Ascending aorta (tissue), 2 donors: ENCODE measurements at regions of chr6 and their contacts with region 1.

Region 1: DNA sequence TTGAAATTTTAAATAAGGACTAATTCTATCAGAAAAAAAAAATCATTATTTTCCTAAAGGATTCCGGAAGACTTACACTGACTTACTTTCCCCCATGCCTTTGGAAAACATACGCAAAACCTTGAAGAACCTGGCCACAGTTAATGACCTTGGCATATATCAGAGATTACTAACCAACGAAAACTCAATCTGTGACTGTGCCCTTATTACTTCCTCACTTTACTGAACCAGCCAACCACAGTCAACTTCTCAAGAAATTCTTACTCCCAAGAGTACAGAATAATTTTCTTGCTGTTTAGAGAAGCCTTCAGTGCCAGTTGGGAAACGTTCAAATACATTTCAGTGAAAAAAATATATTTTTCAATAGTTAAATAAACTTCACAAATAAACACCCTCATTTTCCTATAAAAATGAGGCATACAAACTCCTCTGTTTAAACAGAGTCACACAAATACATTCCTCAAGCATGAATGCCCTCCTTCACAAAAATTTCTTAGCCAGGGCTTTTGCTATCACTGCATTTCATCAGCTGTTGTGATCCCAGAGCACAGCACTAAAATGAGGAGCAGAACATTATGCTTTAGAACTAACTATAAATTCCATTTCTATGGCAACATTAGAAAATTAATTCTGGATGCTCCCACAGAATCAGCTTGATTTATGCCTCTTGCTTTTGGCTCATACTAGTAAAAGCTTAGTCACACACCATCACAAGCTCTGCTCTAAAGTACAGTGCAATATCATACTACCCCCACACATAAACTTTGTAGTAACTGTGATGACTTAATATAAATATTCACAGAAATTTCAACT is 117.6 kb downstream of the DST start:
- DNase-seq: no peak
- H3K4me3 ChIP-seq: peak overlapping the region; percentile 11 to 12
- H3K27ac ChIP-seq: peak overlapping the region; percentile 78 to 82
- H3K4me1 ChIP-seq: peaks cover 0 to 49% of the 10 kb centered on the region in 2 donors
- H3K27me3 ChIP-seq: no peaks in the 10 kb centered on the region
- CTCF ChIP-seq: no peak

Region 2: GRCh38 chr6:56507517-56507916 is 17.6 kb before region 1 on chr6:
- intact Hi-C with region 1: loop called (anchors 2 kb)
- DNase-seq: no peak
- H3K4me3 ChIP-seq: no peak overlapping the region
- H3K27ac ChIP-seq: peak overlapping the region; percentile 65 to 82
- H3K4me1 ChIP-seq: peaks cover 0 to 33% of the 10 kb centered on the region in 2 donors
- H3K27me3 ChIP-seq: no peaks in the 10 kb centered on the region
- CTCF ChIP-seq: no peak